Activated T-helper 1 cell treated with anti-CD3 and anti-CD28 coated beads, Interleukin-12 subunit alpha, Interleukin-12 subunit beta, Interleukin-2, Interleukin-4 antibody, amounts not matched to agents 30 ng/mL and 10 ng/mL and 1 ng/mL, durations not matched to agents 14 hours and 24 hours and 36 hours (primary cell): ENCODE measurements at regions of chr20 and their contacts with region 1.

Region 1: GRCh38 chr20:58980700-58981627 is at the start of gene NELFCD:
- DNase-seq: peak; percentile 86
- H3K4me3 Mint-ChIP-seq: peak within 1 kb of the TSS; percentile 94
- H3K27ac Mint-ChIP-seq: peak within 1 kb of the TSS; percentile 91
- H3K4me1 Mint-ChIP-seq: peaks cover 21% of the 10 kb centered on the region
- H3K27me3 Mint-ChIP-seq: peaks cover 12% of the 10 kb centered on the region
- total RNA-seq, gene NELFCD: 121 and 135 TPM in 2 replicates

Region 2: GRCh38 chr20:58236612-58237330 is 744.2 kb before region 1 on chr20:
- intact Hi-C with region 1: loop called (anchors 5 kb)
- DNase-seq: peak; percentile 79
- H3K4me3 Mint-ChIP-seq: peak overlapping the region; percentile 83
- H3K27ac Mint-ChIP-seq: peak overlapping the region; percentile 84
- H3K4me1 Mint-ChIP-seq: peaks cover 30% of the 10 kb centered on the region
- H3K27me3 Mint-ChIP-seq: no peaks in the 10 kb centered on the region

Region 3: DNA sequence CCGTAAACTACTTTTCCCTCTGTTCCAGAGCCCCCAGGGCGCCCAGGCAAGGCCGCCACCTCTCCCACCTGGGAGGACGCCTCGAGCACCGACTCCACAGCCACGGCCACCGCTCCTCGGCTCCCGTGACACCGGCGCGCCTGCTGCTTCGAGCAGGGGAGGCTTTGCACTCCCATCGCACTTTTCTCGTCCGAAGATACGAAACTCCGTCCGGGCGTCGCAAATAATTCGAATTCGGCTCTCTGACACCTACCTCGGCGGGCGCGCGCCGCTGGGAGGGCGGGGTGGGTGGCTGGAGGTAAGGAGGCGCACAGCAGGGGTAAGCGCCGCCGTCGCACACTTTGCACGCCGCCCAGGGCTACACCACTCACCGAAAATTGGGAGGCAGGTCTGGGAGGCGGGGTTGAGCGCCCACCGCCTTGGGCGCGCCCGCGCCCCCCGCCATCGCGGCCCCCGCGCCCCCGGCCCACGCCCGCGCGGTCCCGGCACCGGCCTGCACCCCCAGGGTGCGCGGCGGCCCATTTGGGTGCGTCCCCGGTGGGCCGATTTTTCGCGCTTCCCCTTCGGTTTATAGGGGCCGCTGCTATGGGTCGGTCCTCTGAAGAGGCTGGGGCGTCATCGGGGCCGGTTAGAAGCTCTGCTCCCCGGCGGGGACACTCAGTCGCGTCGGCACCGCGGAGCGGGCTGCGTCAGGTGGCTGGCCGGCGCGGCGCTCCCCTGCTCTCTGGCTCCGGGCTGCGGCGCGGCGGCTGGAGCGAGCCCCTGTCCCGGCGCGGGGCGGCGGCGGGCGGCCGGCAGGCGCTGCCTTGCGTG is 92.2 kb before region 1 on chr20:
- intact Hi-C with region 1: loop called (anchors 1 kb)
- DNase-seq: peak; percentile 79
- H3K4me3 Mint-ChIP-seq: peak overlapping the region; percentile 81
- H3K27ac Mint-ChIP-seq: peak overlapping the region; percentile 40
- H3K4me1 Mint-ChIP-seq: peaks cover 33% of the 10 kb centered on the region
- H3K27me3 Mint-ChIP-seq: no peaks in the 10 kb centered on the region

Region 4: DNA sequence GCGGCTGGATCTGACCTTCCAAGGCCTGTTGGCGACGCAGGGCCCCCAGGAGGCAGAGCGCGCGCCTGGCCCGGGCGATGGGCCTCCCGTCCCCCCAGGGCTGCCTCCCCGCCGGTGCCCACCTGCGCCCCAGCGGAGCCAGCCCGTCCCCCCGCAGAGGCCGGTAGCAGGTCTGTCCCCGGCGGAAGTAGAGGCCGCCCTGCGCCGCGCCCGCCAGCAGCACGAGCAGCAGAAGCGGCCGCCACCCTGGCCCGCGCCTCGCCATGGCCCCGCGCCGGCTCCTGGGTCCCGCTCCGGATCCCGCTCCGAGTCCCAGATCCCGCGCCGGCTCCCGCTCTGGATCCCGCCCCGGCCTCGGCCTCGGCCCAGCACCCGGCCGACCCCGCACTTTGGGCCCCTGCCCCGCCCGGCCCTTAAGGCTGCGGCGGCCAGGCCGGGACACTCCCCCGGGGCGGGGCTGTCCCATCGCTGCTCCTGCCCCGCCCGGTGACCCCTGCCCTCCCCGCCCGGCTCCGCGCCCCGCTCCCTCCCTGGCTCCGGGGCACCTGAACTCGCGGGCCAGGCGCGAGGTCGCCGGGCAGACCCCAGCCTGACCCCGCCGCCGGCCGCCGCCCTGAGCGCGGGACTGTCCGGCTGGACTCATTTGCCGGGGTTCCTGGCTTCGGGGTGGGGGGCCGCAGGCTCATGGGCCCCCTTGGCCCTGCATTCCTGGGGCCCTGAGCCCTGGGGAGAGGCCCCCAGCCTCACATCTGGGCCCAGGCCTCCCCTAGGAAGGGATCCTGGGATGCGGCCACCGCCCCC is 26.1 kb after region 1 on chr20 and contains the start of gene CTSZ:
- intact Hi-C with region 1: loop called (anchors 1 kb)
- DNase-seq: peak; percentile 33
- H3K4me3 Mint-ChIP-seq: peak within 1 kb of the TSS; percentile 85
- H3K27ac Mint-ChIP-seq: peak within 1 kb of the TSS; percentile 83
- H3K4me1 Mint-ChIP-seq: peaks cover 47% of the 10 kb centered on the region
- H3K27me3 Mint-ChIP-seq: no peaks in the 10 kb centered on the region
- total RNA-seq, gene CTSZ: 46.4 and 54.1 TPM in 2 replicates

Region 5: GRCh38 chr20:59042796-59043660 is 62.1 kb after region 1 on chr20:
- intact Hi-C with region 1: loop called (anchors 1 kb)
- DNase-seq: peak; percentile 94
- H3K4me3 Mint-ChIP-seq: peak overlapping the region; percentile 93
- H3K27ac Mint-ChIP-seq: peak overlapping the region; percentile 94
- H3K4me1 Mint-ChIP-seq: peaks cover 44% of the 10 kb centered on the region
- H3K27me3 Mint-ChIP-seq: no peaks in the 10 kb centered on the region